ENCODE measurements at regions of chrX and their contacts with region 1.

Region 1: DNA sequence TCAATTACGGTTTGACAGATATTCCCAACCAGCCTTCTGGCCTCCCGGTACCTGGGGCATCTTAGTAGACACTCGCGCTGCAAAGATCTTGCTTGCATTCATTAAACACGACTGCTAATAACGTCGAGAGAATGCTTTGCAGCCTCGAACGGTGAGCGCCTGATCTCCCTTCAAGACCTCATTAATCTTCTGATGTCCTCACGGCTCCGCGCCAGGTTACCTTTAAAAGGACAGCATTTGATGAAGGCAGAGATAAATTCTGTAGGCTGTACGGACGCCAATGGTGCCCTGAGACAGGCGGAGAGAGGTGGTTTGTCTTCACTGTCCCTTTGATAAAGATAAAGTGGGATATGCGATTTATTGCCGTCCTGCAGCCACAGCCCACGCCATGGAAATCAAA is 64.2 kb downstream of the SHOX start:
- DNase-seq: no peak
- H3K4me3 ChIP-seq: no peak overlapping the region
- H3K27ac ChIP-seq: no peak overlapping the region
- H3K4me1 ChIP-seq: no peaks in the 10 kb centered on the region
- H3K27me3 ChIP-seq: no peaks in the 10 kb centered on the region
- CTCF ChIP-seq: no peak
- EP300 ChIP-seq: no peak
- POLR2A ChIP-seq: no peak

Region 2: GRCh38 chrX:644304-645281 is 50.2 kb before region 1 on chrX:
- in situ Hi-C with region 1: no loop called
- intact Hi-C with region 1: no loop called
- DNase-seq: peak; percentile 82
- H3K4me3 ChIP-seq: peak overlapping the region in 3 of 4 donors; percentile 43 to 55 (median 49)
- H3K27ac ChIP-seq: peak overlapping the region; percentile 35 to 75 (median 64)
- H3K4me1 ChIP-seq: peaks cover 0 to 5% (median 1%) of the 10 kb centered on the region in 4 donors
- H3K27me3 ChIP-seq: peaks cover 52% of the 10 kb centered on the region
- CTCF ChIP-seq: no peak
- EP300 ChIP-seq: no peak
- POLR2A ChIP-seq: no peak

Region 3: DNA sequence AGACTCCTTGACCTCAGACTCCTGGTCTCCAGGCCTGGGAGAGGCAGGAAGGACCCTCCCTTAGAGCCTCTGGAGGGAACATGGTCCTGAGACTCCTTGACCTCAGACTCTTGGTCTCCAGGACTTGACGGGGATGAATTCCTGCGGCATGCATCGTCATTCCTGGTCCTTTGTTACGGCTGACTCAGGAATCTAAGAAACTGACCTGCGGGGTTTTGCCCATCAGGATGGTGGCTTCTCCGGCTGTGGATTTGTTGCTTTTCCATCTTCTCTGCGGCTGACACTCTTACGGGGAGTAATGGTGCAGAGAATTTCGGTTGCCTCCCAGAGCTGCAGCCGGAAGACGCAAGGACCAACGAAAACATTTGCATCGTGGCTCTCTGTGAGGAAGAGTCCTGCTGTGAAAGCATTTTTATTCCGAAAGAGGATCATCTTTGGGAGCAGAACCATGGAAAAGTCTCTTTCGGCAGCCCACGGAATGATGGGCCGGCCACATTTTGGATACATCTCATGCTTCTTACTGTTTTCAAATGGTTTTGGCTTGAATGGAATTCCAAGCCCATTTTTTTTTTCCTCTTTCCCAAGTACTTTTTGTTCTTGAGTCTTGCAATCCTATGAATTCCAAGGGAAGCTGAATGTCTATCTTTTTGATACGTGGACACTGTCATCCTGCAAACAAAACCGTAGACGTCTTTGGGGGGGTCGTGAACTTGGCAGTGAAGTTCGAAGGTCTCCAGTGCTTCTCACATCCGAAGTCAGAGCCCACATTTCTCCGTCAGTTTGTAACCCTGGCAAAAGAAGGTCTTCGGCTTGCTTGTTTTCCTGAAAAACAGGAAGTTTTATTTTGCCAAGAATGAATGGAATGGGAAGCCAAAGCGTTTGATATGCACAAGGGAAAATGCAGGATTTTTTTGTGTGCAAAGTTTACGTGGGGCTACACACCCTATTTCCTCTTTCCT is 27.8 kb before region 1 on chrX:
- in situ Hi-C with region 1: no loop called
- intact Hi-C with region 1: loop called (anchors 1 kb)
- DNase-seq: no peak
- H3K4me3 ChIP-seq: no peak overlapping the region
- H3K27ac ChIP-seq: no peak overlapping the region
- H3K4me1 ChIP-seq: no peaks in the 10 kb centered on the region
- H3K27me3 ChIP-seq: no peaks in the 10 kb centered on the region
- CTCF ChIP-seq: no peak
- EP300 ChIP-seq: no peak
- POLR2A ChIP-seq: no peak